GM12878 (cell line): ENCODE measurements at regions of chr2 and their contacts with region 1.

Region 1: GRCh38 chr2:136135921-136136906 is 18.3 kb upstream of the CXCR4 start:
- DNase-seq: no peak
- ATAC-seq: peak; percentile 64
- H3K4me3 ChIP-seq: no peak overlapping the region
- H3K27ac ChIP-seq: no peak overlapping the region
- H3K4me1 ChIP-seq: peaks cover 42% of the 10 kb centered on the region
- H3K27me3 ChIP-seq: peaks cover 0 to 21% of the 10 kb centered on the region in 2 experiments; a peak in 2 of 4 replicates
- CTCF ChIP-seq: no peak
- EP300 ChIP-seq: peak; percentile 97; a peak in 3 of 4 replicates
- POLR2A ChIP-seq: no peak
- RAD21 ChIP-seq: no peak

Region 2: DNA sequence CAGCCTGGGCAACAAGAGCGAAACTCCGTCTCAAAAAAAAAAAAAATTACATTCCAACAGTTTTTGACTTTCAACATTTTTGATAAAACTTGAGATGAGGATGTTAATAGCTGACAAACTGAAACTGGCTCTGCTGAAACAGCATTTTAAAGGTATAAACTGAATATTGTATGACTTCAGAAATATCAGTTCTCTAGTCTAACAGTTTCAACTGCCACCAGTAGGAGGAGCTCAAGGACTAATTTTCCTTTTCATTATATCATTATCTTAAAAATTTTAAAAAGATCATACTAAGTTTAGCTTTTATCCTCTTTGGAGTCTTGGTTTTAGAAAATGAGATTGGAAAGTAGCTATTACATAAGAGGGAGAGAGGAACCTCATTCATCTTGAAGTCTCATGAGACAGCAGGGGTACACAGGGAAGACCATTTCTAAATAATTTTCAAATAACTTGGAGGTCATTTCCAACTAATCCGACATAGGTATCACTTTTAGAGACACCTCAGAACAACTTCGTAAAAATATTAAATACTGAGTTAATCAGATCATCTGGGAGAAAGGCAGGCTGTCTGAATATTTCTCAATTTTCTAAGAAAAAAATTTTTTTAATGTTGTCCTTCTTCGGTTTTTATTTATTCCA is 222.4 kb before region 1 on chr2:
- CTCF ChIA-PET with region 1: interaction called, 10 read pairs
- POLR2A ChIA-PET with region 1: no interaction called
- RAD21 ChIA-PET with region 1: interaction called, 8 read pairs
- SMC1A ChIA-PET with region 1: interaction called, 10 read pairs
- in situ Hi-C with region 1: no loop called
- intact Hi-C with region 1: loop called (anchors 5 kb)
- DNase-seq: no peak
- ATAC-seq: peak; percentile 75
- H3K4me3 ChIP-seq: no peak overlapping the region
- H3K27ac ChIP-seq: no peak overlapping the region
- H3K4me1 ChIP-seq: no peaks in the 10 kb centered on the region
- H3K27me3 ChIP-seq: no peaks in the 10 kb centered on the region
- CTCF ChIP-seq: peak; percentile 58 to 68 (median 63); a peak in 5 of 6 replicates
- EP300 ChIP-seq: no peak
- POLR2A ChIP-seq: no peak
- RAD21 ChIP-seq: peak; percentile 75

Region 3: DNA sequence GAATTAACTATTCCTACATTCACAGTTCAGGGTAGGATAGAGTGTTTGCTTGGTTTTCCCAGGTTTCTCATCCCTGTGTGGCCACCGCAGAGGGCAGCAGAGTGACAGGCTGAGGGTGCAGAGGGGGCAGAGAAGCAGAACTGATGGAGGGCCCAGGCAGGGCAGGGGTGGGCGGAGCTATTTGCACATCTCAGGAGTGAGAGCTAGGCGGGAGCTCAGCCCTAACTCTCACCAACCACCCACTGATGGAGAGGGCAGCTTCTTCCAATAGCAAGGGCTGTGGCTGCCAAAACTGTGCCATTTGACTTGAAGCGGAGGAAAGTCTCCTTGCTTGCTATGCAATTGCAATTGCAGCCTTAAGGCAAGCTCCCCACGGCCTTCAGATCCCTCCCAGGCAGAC is 138.8 kb before region 1 on chr2:
- CTCF ChIA-PET with region 1: interaction called, 8 read pairs
- POLR2A ChIA-PET with region 1: no interaction called
- RAD21 ChIA-PET with region 1: interaction called, 19 read pairs
- SMC1A ChIA-PET with region 1: interaction called, 17 read pairs
- in situ Hi-C with region 1: no loop called
- intact Hi-C with region 1: no loop called
- DNase-seq: no peak
- ATAC-seq: peak; percentile 82
- H3K4me3 ChIP-seq: no peak overlapping the region
- H3K27ac ChIP-seq: no peak overlapping the region
- H3K4me1 ChIP-seq: peaks cover 11% of the 10 kb centered on the region
- H3K27me3 ChIP-seq: no peaks in the 10 kb centered on the region
- CTCF ChIP-seq: peak; percentile 5 to 27 (median 7); a peak in 3 of 6 replicates
- EP300 ChIP-seq: no peak
- POLR2A ChIP-seq: no peak
- RAD21 ChIP-seq: peak; percentile 61

Region 4: DNA sequence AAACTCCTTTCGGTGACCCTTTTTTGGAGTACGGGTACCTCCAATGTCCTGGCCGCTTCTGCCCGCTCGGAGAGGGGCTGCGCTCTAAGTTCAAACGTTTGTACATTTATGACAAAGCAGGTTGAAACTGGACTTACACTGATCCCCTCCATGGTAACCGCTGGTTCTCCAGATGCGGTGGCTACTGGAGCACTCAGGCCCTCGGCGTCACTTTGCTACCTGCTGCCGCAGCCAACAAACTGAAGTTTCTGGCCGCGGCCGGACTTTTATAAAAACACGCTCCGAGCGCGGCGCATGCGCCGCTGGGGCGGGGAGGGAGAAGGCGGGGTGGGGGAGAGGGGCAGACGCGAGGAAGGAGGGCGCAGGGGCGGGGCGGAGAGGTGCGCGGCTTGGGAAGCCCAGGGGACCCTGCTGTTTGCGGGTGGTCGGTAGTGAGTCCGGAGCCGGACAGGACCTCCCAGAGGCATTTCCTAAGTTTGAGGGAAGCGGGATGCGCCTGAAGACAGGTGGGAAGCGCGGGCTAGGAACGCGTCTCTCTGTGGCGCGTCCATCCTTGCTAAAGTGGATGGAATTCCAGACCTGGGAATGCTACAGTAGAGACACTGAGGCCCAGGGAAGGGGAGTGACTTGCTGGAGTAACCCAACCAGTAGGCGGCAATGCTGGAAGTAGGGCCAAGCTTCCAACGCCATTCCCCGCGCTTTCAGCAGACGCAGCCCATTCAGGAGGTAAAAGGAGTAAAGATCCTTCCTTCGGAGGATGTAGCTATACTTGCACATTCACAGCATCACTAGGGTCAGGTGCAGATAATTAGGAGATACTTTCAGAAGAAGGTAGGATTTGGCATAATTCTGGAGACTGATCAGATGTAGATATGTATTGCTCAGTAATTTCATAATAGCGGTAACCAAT is 18.1 kb before region 1 on chr2 and contains the start of gene CXCR4:
- CTCF ChIA-PET with region 1: interaction called, 4 read pairs
- POLR2A ChIA-PET with region 1: interaction called, 20 read pairs
- RAD21 ChIA-PET with region 1: interaction called, 62 read pairs
- SMC1A ChIA-PET with region 1: interaction called, 50 read pairs
- in situ Hi-C with region 1: no loop called
- intact Hi-C with region 1: no loop called
- DNase-seq: no peak
- ATAC-seq: peak; percentile 43
- H3K4me3 ChIP-seq: peak within 1 kb of the TSS; percentile 85
- H3K27ac ChIP-seq: peak within 1 kb of the TSS; percentile 40; the same call in 1 of the 2 replicates
- H3K4me1 ChIP-seq: peaks cover 2% of the 10 kb centered on the region; the same call in 1 of the 2 replicates
- H3K27me3 ChIP-seq: peaks cover 0 to 12% of the 10 kb centered on the region in 2 experiments
- CTCF ChIP-seq: peak in 1 of 3 experiments; percentile 19; a peak in 1 of 6 replicates
- EP300 ChIP-seq: no peak
- POLR2A ChIP-seq: peak; percentile 97
- RAD21 ChIP-seq: 0 out of 2 replicates have a peak, but pooled peaks have one; percentile 9
- polyA plus RNA-seq, gene CXCR4: 31.1 to 32.3 TPM

Region 5: DNA sequence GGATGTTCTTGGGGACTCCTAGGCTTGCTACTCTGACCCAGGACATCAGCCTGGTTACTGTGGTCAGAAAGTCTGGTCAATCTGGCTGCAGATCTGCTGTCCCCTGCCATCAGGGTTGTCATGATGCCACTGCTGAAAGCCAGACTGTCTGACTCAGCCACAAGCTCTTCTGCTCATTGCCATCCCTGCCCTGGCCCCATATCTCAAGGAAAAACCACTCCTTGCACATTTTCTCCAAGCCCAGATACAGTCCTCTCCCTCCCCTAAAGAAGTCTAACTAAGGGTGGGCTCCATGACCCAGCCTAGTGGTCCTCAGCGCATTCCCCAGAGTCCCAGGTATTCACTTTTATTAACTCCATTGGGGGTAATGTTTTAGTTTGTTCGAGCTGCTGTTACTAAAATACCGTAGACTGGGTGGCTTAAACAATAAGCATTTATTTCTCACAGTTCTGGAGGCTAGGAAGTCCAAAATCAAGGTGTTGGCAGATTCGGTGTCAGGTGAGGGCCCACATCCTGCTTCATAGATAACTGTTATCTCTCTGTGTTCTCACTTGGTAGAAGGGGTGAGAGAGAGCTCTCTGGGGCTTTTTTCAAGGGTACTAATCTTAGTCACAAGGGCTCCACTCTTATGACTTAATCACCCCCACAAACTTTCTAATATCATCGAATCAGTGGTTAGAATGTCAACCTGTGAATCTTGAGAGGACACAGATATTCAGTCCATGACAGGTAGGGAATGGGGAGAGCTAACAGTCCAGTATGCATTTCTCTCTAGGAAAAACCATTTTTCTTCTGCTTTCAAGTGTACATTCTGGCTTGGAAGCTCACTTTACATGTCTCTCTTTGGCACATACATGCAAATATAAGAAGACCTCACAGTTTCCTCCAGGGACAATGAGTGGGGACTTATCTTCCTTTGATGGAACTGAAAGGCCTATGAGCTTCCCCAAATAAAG is 76.5 kb after region 1 on chr2:
- CTCF ChIA-PET with region 1: interaction called, 13 read pairs
- POLR2A ChIA-PET with region 1: interaction called, 53 read pairs
- RAD21 ChIA-PET with region 1: interaction called, 124 read pairs
- SMC1A ChIA-PET with region 1: interaction called, 202 read pairs
- in situ Hi-C with region 1: no loop called
- intact Hi-C with region 1: loop called (anchors 2 kb)
- DNase-seq: peak; percentile 34
- ATAC-seq: peak; percentile 83
- H3K4me3 ChIP-seq: no peak overlapping the region
- H3K27ac ChIP-seq: no peak overlapping the region
- H3K4me1 ChIP-seq: peaks cover 4% of the 10 kb centered on the region
- H3K27me3 ChIP-seq: peaks cover 0 to 8% of the 10 kb centered on the region in 2 experiments; a peak in 2 of 4 replicates
- CTCF ChIP-seq: no peak
- EP300 ChIP-seq: peak in 1 of 2 experiments; percentile 78; a peak in 3 of 4 replicates
- POLR2A ChIP-seq: no peak
- RAD21 ChIP-seq: no peak

Region 6: DNA sequence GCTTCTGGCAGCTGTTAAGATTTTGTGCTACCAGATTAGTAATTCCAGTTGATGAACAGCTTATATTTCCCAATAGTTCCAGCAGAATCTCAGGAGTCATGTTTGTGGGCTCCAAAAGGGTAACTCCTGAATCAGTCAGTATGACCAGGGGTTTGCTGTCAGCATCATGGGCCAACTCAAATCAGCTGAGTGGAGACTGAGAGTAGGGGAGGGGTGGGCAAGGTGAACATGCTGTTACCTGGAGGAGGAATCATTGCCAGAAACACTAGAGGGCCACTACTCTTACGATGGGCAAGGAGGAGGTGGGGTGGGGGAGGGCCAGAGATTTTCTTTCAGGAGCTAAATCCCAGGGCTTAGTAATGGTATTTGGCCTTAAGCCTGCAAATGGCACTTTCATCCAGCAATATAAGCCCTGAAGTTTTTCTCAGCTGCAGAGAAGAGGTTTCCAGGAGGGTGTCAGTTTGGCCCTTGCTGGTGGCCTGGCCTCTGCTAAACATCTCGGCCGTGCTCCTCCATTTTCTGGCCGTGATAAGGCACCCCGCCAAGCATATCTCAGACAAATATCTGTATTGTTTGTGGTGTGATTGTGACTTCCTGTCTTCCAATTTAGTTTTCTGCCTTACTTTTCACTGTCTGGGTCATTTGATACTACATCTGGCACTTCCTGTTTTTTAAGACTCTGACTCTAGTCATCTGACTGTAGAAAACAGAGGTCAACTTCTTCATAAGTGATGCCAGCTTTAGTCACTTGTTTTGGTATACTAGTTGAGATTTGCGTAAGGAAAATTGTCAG is 102.3 kb after region 1 on chr2:
- CTCF ChIA-PET with region 1: interaction called, 15 read pairs
- POLR2A ChIA-PET with region 1: interaction called, 9 read pairs
- RAD21 ChIA-PET with region 1: interaction called, 58 read pairs
- SMC1A ChIA-PET with region 1: interaction called, 51 read pairs
- in situ Hi-C with region 1: no loop called
- intact Hi-C with region 1: loop called (anchors 5 kb)
- DNase-seq: peak; percentile 78
- ATAC-seq: peak; percentile 89
- H3K4me3 ChIP-seq: no peak overlapping the region
- H3K27ac ChIP-seq: no peak overlapping the region
- H3K4me1 ChIP-seq: peaks cover 18% of the 10 kb centered on the region
- H3K27me3 ChIP-seq: no peaks in the 10 kb centered on the region
- CTCF ChIP-seq: no peak
- EP300 ChIP-seq: peak; percentile 97 to 99
- POLR2A ChIP-seq: no peak
- RAD21 ChIP-seq: no peak

Region 7: GRCh38 chr2:136327162-136327852 is 191.1 kb after region 1 on chr2:
- CTCF ChIA-PET with region 1: interaction called, 4 read pairs
- POLR2A ChIA-PET with region 1: interaction called, 7 read pairs
- RAD21 ChIA-PET with region 1: interaction called, 36 read pairs
- SMC1A ChIA-PET with region 1: interaction called, 13 read pairs
- in situ Hi-C with region 1: loop called (anchors 5 kb)
- intact Hi-C with region 1: loop called (anchors 2 kb)
- DNase-seq: peak; percentile 71
- ATAC-seq: peak; percentile 89
- H3K4me3 ChIP-seq: peak overlapping the region; percentile 37; the same call in 1 of the 2 replicates
- H3K27ac ChIP-seq: no peak overlapping the region
- H3K4me1 ChIP-seq: peaks cover 26% of the 10 kb centered on the region
- H3K27me3 ChIP-seq: 0 out of 4 replicates have a peak, but pooled peaks cover 0 to 2% of the 10 kb centered on the region in 2 experiments
- CTCF ChIP-seq: no peak
- EP300 ChIP-seq: peak; percentile 95 to 96; a peak in 3 of 4 replicates
- POLR2A ChIP-seq: no peak
- RAD21 ChIP-seq: no peak